ENCODE measurements at regions of chr4 and their contacts with region 1.

Region 1: GRCh38 chr4:105520817-105521790 is 31.3 kb upstream of the ARHGEF38 start:
- DNase-seq: peak; percentile 15
- ATAC-seq: peak; percentile 95
- H3K4me3 ChIP-seq: no peak overlapping the region
- H3K27ac ChIP-seq: no peak overlapping the region
- H3K4me1 ChIP-seq: no peaks in the 10 kb centered on the region
- H3K27me3 ChIP-seq: no peaks in the 10 kb centered on the region
- CTCF ChIP-seq: peak; percentile 60 to 82 (median 70)
- EP300 ChIP-seq: no peak
- POLR2A ChIP-seq: no peak
- RAD21 ChIP-seq: peak; percentile 96

Region 2: GRCh38 chr4:105272002-105272401 is 249.1 kb before region 1 on chr4:
- CTCF ChIA-PET with region 1: no interaction called
- POLR2A ChIA-PET with region 1: no interaction called
- RAD21 ChIA-PET with region 1: no interaction called
- SMC1A ChIA-PET with region 1: no interaction called
- in situ Hi-C with region 1: no loop called
- intact Hi-C with region 1: no loop called
- DNase-seq: no peak
- ATAC-seq: no peak
- H3K4me3 ChIP-seq: no peak overlapping the region
- H3K27ac ChIP-seq: no peak overlapping the region
- H3K4me1 ChIP-seq: no peaks in the 10 kb centered on the region
- H3K27me3 ChIP-seq: no peaks in the 10 kb centered on the region
- CTCF ChIP-seq: no peak
- EP300 ChIP-seq: no peak
- POLR2A ChIP-seq: no peak
- RAD21 ChIP-seq: no peak

Region 3: DNA sequence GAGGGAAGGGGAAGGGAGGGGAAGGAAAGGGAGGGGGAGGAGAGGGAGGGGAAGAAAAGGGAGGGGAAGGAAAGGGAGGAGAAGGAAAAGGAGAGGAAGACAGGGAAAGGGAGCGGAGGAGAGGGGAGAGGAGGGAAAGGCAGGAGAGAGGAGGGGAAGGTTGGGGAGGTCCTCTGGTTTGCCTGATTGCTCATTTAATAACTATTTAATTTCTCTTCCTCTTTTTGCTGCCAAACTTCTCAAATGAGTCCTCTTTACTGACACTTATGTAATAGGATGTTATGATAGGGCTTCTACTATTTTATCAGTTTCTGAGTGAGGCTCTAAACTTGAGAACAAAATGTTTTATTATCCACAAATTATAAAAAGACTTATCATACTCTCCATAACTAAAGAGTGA is 11.8 kb before region 1 on chr4:
- CTCF ChIA-PET with region 1: interaction called, 12 read pairs
- POLR2A ChIA-PET with region 1: no interaction called
- RAD21 ChIA-PET with region 1: interaction called, 5 read pairs
- SMC1A ChIA-PET with region 1: interaction called, 12 read pairs
- in situ Hi-C with region 1: no loop called
- intact Hi-C with region 1: no loop called
- DNase-seq: peak; percentile 20
- ATAC-seq: peak; percentile 96
- H3K4me3 ChIP-seq: no peak overlapping the region
- H3K27ac ChIP-seq: no peak overlapping the region
- H3K4me1 ChIP-seq: peaks cover 8% of the 10 kb centered on the region; the same call in 1 of the 2 replicates
- H3K27me3 ChIP-seq: no peaks in the 10 kb centered on the region
- CTCF ChIP-seq: no peak
- EP300 ChIP-seq: peak; percentile 18 to 78; a peak in 2 of 4 replicates
- POLR2A ChIP-seq: no peak
- RAD21 ChIP-seq: no peak

Region 4: DNA sequence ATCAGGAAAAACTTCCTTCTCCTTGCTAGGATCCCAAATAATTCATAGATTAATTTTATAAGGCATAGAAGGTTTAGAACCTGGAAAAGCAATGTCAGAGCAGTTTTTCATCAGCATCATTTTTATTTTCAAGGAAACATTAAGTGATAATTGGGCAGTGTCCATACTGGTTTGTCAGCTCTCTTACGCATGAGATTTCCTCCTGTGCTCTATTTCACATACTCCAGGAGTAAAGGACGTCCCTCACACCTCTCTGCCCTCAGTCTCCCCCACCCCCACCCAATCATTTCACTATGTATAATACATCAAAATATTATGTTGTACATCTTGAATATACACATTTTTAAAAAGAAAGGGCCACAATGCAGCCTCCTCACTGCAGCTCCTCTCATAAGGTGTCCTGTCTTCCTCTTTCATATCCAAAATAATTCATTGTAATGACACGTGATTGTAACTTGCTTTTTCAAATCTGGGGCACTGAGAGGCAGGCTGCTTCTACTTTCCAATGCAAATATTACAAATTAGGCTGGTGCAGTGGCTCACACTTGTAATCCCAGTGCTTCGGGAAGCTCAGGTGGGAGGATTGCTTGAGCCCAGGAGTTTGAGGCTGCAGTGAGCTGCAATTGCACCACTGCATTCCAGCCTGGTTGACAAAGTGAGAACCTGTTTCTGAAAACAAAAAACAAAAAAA is 65.7 kb after region 1 on chr4:
- CTCF ChIA-PET with region 1: interaction called, 15 read pairs
- POLR2A ChIA-PET with region 1: no interaction called
- RAD21 ChIA-PET with region 1: interaction called, 9 read pairs
- SMC1A ChIA-PET with region 1: interaction called, 15 read pairs
- in situ Hi-C with region 1: no loop called
- intact Hi-C with region 1: loop called (anchors 5 kb)
- DNase-seq: no peak
- ATAC-seq: peak; percentile 61
- H3K4me3 ChIP-seq: no peak overlapping the region
- H3K27ac ChIP-seq: no peak overlapping the region
- H3K4me1 ChIP-seq: peaks cover 10% of the 10 kb centered on the region; the same call in 1 of the 2 replicates
- H3K27me3 ChIP-seq: no peaks in the 10 kb centered on the region
- CTCF ChIP-seq: no peak; a peak in 1 of 6 replicates
- EP300 ChIP-seq: no peak
- POLR2A ChIP-seq: no peak
- RAD21 ChIP-seq: 0 out of 2 replicates have a peak, but pooled peaks have one; percentile 9

Region 5: GRCh38 chr4:105605493-105605892 is 84.4 kb after region 1 on chr4:
- CTCF ChIA-PET with region 1: interaction called, 5 read pairs
- POLR2A ChIA-PET with region 1: no interaction called
- RAD21 ChIA-PET with region 1: interaction called, 5 read pairs
- SMC1A ChIA-PET with region 1: interaction called, 11 read pairs
- in situ Hi-C with region 1: no loop called
- intact Hi-C with region 1: no loop called
- DNase-seq: no peak
- ATAC-seq: peak; percentile 71
- H3K4me3 ChIP-seq: no peak overlapping the region
- H3K27ac ChIP-seq: no peak overlapping the region
- H3K4me1 ChIP-seq: no peaks in the 10 kb centered on the region
- H3K27me3 ChIP-seq: no peaks in the 10 kb centered on the region
- CTCF ChIP-seq: no peak
- EP300 ChIP-seq: 0 out of 4 replicates have a peak, but pooled peaks of 1 of the 2 experiments have one; percentile 58
- POLR2A ChIP-seq: no peak
- RAD21 ChIP-seq: no peak

Region 6: GRCh38 chr4:105657117-105657765 is 136.1 kb after region 1 on chr4:
- CTCF ChIA-PET with region 1: interaction called, 15 read pairs
- POLR2A ChIA-PET with region 1: no interaction called
- RAD21 ChIA-PET with region 1: interaction called, 5 read pairs
- SMC1A ChIA-PET with region 1: interaction called, 146 read pairs
- in situ Hi-C with region 1: no loop called
- intact Hi-C with region 1: no loop called
- DNase-seq: no peak
- ATAC-seq: no peak
- H3K4me3 ChIP-seq: no peak overlapping the region
- H3K27ac ChIP-seq: no peak overlapping the region
- H3K4me1 ChIP-seq: no peaks in the 10 kb centered on the region
- H3K27me3 ChIP-seq: no peaks in the 10 kb centered on the region
- CTCF ChIP-seq: no peak
- EP300 ChIP-seq: no peak
- POLR2A ChIP-seq: no peak
- RAD21 ChIP-seq: no peak

Region 7: GRCh38 chr4:105708530-105709391 is 187.7 kb after region 1 on chr4 and contains the starts of genes GSTCD and INTS12:
- CTCF ChIA-PET with region 1: interaction called, 106 read pairs
- POLR2A ChIA-PET with region 1: no interaction called
- RAD21 ChIA-PET with region 1: interaction called, 46 read pairs
- SMC1A ChIA-PET with region 1: interaction called, 10 read pairs
- in situ Hi-C with region 1: no loop called
- intact Hi-C with region 1: no loop called
- DNase-seq: peak; percentile 66
- ATAC-seq: peak; percentile 81
- H3K4me3 ChIP-seq: peak within 1 kb of the TSS; percentile 99
- H3K27ac ChIP-seq: peak within 1 kb of the TSS; percentile 81
- H3K4me1 ChIP-seq: no peaks in the 10 kb centered on the region
- H3K27me3 ChIP-seq: no peaks in the 10 kb centered on the region
- CTCF ChIP-seq: no peak
- EP300 ChIP-seq: peak in 1 of 2 experiments; percentile 46; a peak in 1 of 4 replicates
- POLR2A ChIP-seq: peak; percentile 93
- RAD21 ChIP-seq: peak; percentile 48; the same call in 1 of the 2 replicates
- polyA plus RNA-seq, gene GSTCD: 4.3 to 5.7 TPM
- polyA plus RNA-seq, gene INTS12: 40.4 to 43.9 TPM

Region 8: GRCh38 chr4:106201373-106201772 is 680.3 kb after region 1 on chr4:
- CTCF ChIA-PET with region 1: interaction called, 5 read pairs
- POLR2A ChIA-PET with region 1: no interaction called
- RAD21 ChIA-PET with region 1: interaction called, 4 read pairs
- SMC1A ChIA-PET with region 1: no interaction called
- in situ Hi-C with region 1: no loop called
- intact Hi-C with region 1: loop called (anchors 10 kb)
- DNase-seq: no peak
- ATAC-seq: peak; percentile 66; the same call in 2 of the 3 replicates
- H3K4me3 ChIP-seq: no peak overlapping the region
- H3K27ac ChIP-seq: no peak overlapping the region
- H3K4me1 ChIP-seq: no peaks in the 10 kb centered on the region
- H3K27me3 ChIP-seq: no peaks in the 10 kb centered on the region
- CTCF ChIP-seq: peak; percentile 17 to 52 (median 40); a peak in 4 of 6 replicates
- EP300 ChIP-seq: no peak
- POLR2A ChIP-seq: no peak
- RAD21 ChIP-seq: peak; percentile 66

Measured in GM12878 (cell line).